Mammary epithelial cell (primary cell): ENCODE measurements at regions of chr1 and their contacts with region 1.

Region 1: GRCh38 chr1:156583821-156584622 is 4.5 kb downstream of the TTC24 start:
- DNase-seq: peak; percentile 56
- H3K4me3 ChIP-seq: no peak overlapping the region
- H3K27ac ChIP-seq: no peak overlapping the region
- H3K4me1 ChIP-seq: no peaks in the 10 kb centered on the region
- H3K27me3 ChIP-seq: no peaks in the 10 kb centered on the region
- CTCF ChIP-seq: peak; percentile 89

Region 2: GRCh38 chr1:156480411-156481192 is 103.4 kb before region 1 on chr1:
- CTCF ChIA-PET with region 1: no interaction called
- dilution Hi-C with region 1: no loop called
- in situ Hi-C with region 1: no loop called
- intact Hi-C with region 1: no loop called
- DNase-seq: no peak
- H3K4me3 ChIP-seq: no peak overlapping the region
- H3K27ac ChIP-seq: no peak overlapping the region
- H3K4me1 ChIP-seq: no peaks in the 10 kb centered on the region
- H3K27me3 ChIP-seq: no peaks in the 10 kb centered on the region
- CTCF ChIP-seq: peak; percentile 45 to 76

Region 3: DNA sequence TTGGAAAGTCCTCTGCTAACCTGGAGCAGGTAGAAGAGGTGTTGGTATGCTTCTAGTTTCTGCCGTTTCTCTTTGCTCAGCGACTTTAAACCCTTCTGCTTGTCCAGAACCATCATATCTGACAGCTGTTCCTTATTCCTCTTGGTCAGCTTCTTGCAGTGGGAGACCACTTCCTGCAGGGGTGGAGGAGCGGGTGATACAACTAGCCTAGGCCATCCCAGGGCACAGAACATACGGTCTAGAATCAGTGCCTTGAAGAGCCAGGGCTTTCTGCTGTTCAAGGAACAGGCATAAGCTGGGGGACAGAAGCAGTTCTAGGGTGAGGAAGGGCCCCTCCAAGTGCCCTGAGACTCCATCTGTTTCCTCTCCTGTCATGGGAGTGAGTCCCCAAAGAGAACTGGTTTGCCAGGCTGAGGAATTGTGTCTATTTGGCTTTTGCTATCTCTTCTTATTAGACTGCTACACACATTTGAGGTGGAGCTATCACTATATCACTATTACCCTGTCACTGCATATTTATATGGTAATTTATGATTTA is 44.1 kb before region 1 on chr1:
- CTCF ChIA-PET with region 1: no interaction called
- dilution Hi-C with region 1: loop called (anchors 5 kb)
- in situ Hi-C with region 1: no loop called
- intact Hi-C with region 1: no loop called
- DNase-seq: no peak
- H3K4me3 ChIP-seq: no peak overlapping the region
- H3K27ac ChIP-seq: no peak overlapping the region
- H3K4me1 ChIP-seq: no peaks in the 10 kb centered on the region
- H3K27me3 ChIP-seq: no peaks in the 10 kb centered on the region
- CTCF ChIP-seq: no peak

Region 4: GRCh38 chr1:156652131-156652991 is 68.3 kb after region 1 on chr1:
- CTCF ChIA-PET with region 1: no interaction called
- dilution Hi-C with region 1: loop called (anchors 5 kb)
- in situ Hi-C with region 1: no loop called
- intact Hi-C with region 1: loop called (anchors 1 kb)
- DNase-seq: peak; percentile 22
- H3K4me3 ChIP-seq: no peak overlapping the region
- H3K27ac ChIP-seq: no peak overlapping the region
- H3K4me1 ChIP-seq: peaks cover 4% of the 10 kb centered on the region
- H3K27me3 ChIP-seq: no peaks in the 10 kb centered on the region
- CTCF ChIP-seq: no peak

Region 5: GRCh38 chr1:156705918-156706656 is 122.1 kb after region 1 on chr1:
- CTCF ChIA-PET with region 1: no interaction called
- dilution Hi-C with region 1: loop called (anchors 10 kb)
- in situ Hi-C with region 1: no loop called
- intact Hi-C with region 1: no loop called
- DNase-seq: no peak
- H3K4me3 ChIP-seq: peak overlapping the region; percentile 16 to 35 (median 22)
- H3K27ac ChIP-seq: no peak overlapping the region
- H3K4me1 ChIP-seq: peaks cover 54% of the 10 kb centered on the region
- H3K27me3 ChIP-seq: no peaks in the 10 kb centered on the region
- CTCF ChIP-seq: peak; percentile 59 to 89